CD4-positive, alpha-beta T cell (primary cell): ENCODE measurements at regions of chr4 and their contacts with region 1.

Region 1: GRCh38 chr4:75514131-75514948 is at the starts of genes RCHY1 and THAP6:
- DNase-seq: peak; percentile 84 to 97 (median 88)
- ATAC-seq: peak; percentile 86
- H3K4me3 ChIP-seq: peak within 1 kb of the TSS; percentile 77
- H3K4me3 Mint-ChIP-seq: no peak within 1 kb of the TSS
- H3K27ac ChIP-seq: peak within 1 kb of the TSS; percentile 94 to 97
- H3K27ac Mint-ChIP-seq: no peak within 1 kb of the TSS
- H3K4me1 ChIP-seq: peaks cover 21% of the 10 kb centered on the region
- H3K4me1 Mint-ChIP-seq: peaks cover 40% of the 10 kb centered on the region
- H3K27me3 ChIP-seq: no peaks in the 10 kb centered on the region
- H3K27me3 Mint-ChIP-seq: no peaks in the 10 kb centered on the region
- CTCF ChIP-seq: no peak
- total RNA-seq, gene RCHY1: 33.6 to 37.0 TPM
- total RNA-seq, gene THAP6: 19.1 to 22.8 TPM

Region 2: GRCh38 chr4:74659576-74660411 is 854.5 kb before region 1 on chr4:
- CTCF ChIA-PET with region 1: no interaction called
- POLR2A ChIA-PET with region 1: no interaction called
- intact Hi-C with region 1: no loop called
- DNase-seq: peak in 2 of 14 experiments; percentile 50 to 63
- ATAC-seq: no peak
- H3K4me3 ChIP-seq: no peak overlapping the region
- H3K4me3 Mint-ChIP-seq: no peak overlapping the region
- H3K27ac ChIP-seq: no peak overlapping the region
- H3K27ac Mint-ChIP-seq: no peak overlapping the region
- H3K4me1 ChIP-seq: no peaks in the 10 kb centered on the region
- H3K4me1 Mint-ChIP-seq: no peaks in the 10 kb centered on the region
- H3K27me3 ChIP-seq: no peaks in the 10 kb centered on the region
- H3K27me3 Mint-ChIP-seq: no peaks in the 10 kb centered on the region
- CTCF ChIP-seq: no peak

Region 3: GRCh38 chr4:75525910-75526309 is 11.6 kb after region 1 on chr4:
- CTCF ChIA-PET with region 1: no interaction called
- POLR2A ChIA-PET with region 1: interaction called, 15 read pairs
- intact Hi-C with region 1: no loop called
- DNase-seq: no peak
- ATAC-seq: no peak
- H3K4me3 ChIP-seq: no peak overlapping the region
- H3K4me3 Mint-ChIP-seq: no peak overlapping the region
- H3K27ac ChIP-seq: no peak overlapping the region
- H3K27ac Mint-ChIP-seq: no peak overlapping the region
- H3K4me1 ChIP-seq: no peaks in the 10 kb centered on the region
- H3K4me1 Mint-ChIP-seq: peaks cover 18% of the 10 kb centered on the region
- H3K27me3 ChIP-seq: no peaks in the 10 kb centered on the region
- H3K27me3 Mint-ChIP-seq: no peaks in the 10 kb centered on the region
- CTCF ChIP-seq: no peak

Region 4: GRCh38 chr4:75630174-75630936 is 116.0 kb after region 1 on chr4 and contains the start of gene CDKL2:
- CTCF ChIA-PET with region 1: no interaction called
- POLR2A ChIA-PET with region 1: interaction called, 14 read pairs
- intact Hi-C with region 1: loop called in 1 of 2 experiments (anchors 5 kb)
- DNase-seq: peak; percentile 88 to 96 (median 92)
- ATAC-seq: peak; percentile 99
- H3K4me3 ChIP-seq: peak within 1 kb of the TSS; percentile 85
- H3K4me3 Mint-ChIP-seq: peak within 1 kb of the TSS; percentile 90
- H3K27ac ChIP-seq: peak within 1 kb of the TSS in 1 of 2 donors; percentile 48
- H3K27ac Mint-ChIP-seq: peak within 1 kb of the TSS; percentile 75
- H3K4me1 ChIP-seq: peaks cover 16% of the 10 kb centered on the region
- H3K4me1 Mint-ChIP-seq: peaks cover 12% of the 10 kb centered on the region
- H3K27me3 ChIP-seq: no peaks in the 10 kb centered on the region
- H3K27me3 Mint-ChIP-seq: no peaks in the 10 kb centered on the region
- CTCF ChIP-seq: no peak
- total RNA-seq, gene CDKL2: 0.38 to 0.92 TPM

Region 5: GRCh38 chr4:75940692-75941253 is 426.4 kb after region 1 on chr4 and contains the start of gene NAAA:
- CTCF ChIA-PET with region 1: no interaction called
- POLR2A ChIA-PET with region 1: interaction called, 22 read pairs
- intact Hi-C with region 1: loop called in 1 of 2 experiments (anchors 10 kb)
- DNase-seq: peak; percentile 51 to 93 (median 72)
- ATAC-seq: peak; percentile 83
- H3K4me3 ChIP-seq: peak within 1 kb of the TSS; percentile 86
- H3K4me3 Mint-ChIP-seq: peak within 1 kb of the TSS; percentile 100
- H3K27ac ChIP-seq: peak within 1 kb of the TSS; percentile 79 to 86
- H3K27ac Mint-ChIP-seq: peak within 1 kb of the TSS; percentile 95
- H3K4me1 ChIP-seq: peaks cover 20% of the 10 kb centered on the region
- H3K4me1 Mint-ChIP-seq: peaks cover 27% of the 10 kb centered on the region
- H3K27me3 ChIP-seq: no peaks in the 10 kb centered on the region
- H3K27me3 Mint-ChIP-seq: no peaks in the 10 kb centered on the region
- CTCF ChIP-seq: no peak
- total RNA-seq, gene NAAA: 32.6 to 33.3 TPM

Region 6: DNA sequence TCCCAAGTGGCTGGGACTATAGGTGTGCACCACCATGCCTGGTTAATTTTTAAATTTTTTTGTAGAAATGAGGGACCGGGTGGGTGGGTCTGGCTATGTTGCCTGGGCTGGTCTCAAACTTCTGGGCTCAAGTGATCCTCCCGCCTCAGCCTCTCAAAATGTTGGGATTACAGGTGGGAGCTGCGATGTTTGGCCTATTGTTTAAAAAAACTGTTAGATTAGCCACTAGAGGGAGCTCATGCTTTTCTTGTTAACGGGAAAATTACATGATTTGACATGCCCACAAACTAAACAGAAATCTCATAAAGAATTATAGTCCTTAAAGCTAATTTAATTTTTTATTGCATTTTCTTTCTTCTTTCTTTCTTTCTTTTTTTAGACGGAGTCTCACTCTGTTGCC is 481.4 kb after region 1 on chr4:
- CTCF ChIA-PET with region 1: no interaction called
- POLR2A ChIA-PET with region 1: interaction called, 9 read pairs
- intact Hi-C with region 1: loop called in 1 of 2 experiments (anchors 10 kb)
- DNase-seq: peak in 5 of 14 experiments; percentile 3 to 71 (median 61)
- ATAC-seq: no peak
- H3K4me3 ChIP-seq: no peak overlapping the region
- H3K4me3 Mint-ChIP-seq: no peak overlapping the region
- H3K27ac ChIP-seq: no peak overlapping the region
- H3K27ac Mint-ChIP-seq: no peak overlapping the region
- H3K4me1 ChIP-seq: peaks cover 6% of the 10 kb centered on the region
- H3K4me1 Mint-ChIP-seq: peaks cover 8% of the 10 kb centered on the region
- H3K27me3 ChIP-seq: no peaks in the 10 kb centered on the region
- H3K27me3 Mint-ChIP-seq: no peaks in the 10 kb centered on the region
- CTCF ChIP-seq: peak; percentile 80

Region 7: GRCh38 chr4:76148142-76148865 is 634.0 kb after region 1 on chr4 and contains the start of gene NUP54:
- CTCF ChIA-PET with region 1: no interaction called
- POLR2A ChIA-PET with region 1: interaction called, 4 read pairs
- intact Hi-C with region 1: loop called (anchors 5 to 10 kb)
- DNase-seq: peak; percentile 90 to 97 (median 93)
- ATAC-seq: peak; percentile 97
- H3K4me3 ChIP-seq: peak within 1 kb of the TSS; percentile 95
- H3K4me3 Mint-ChIP-seq: peak within 1 kb of the TSS; percentile 99
- H3K27ac ChIP-seq: peak within 1 kb of the TSS; percentile 80 to 90
- H3K27ac Mint-ChIP-seq: peak within 1 kb of the TSS; percentile 92
- H3K4me1 ChIP-seq: peaks cover 15% of the 10 kb centered on the region
- H3K4me1 Mint-ChIP-seq: peaks cover 38% of the 10 kb centered on the region
- H3K27me3 ChIP-seq: no peaks in the 10 kb centered on the region
- H3K27me3 Mint-ChIP-seq: no peaks in the 10 kb centered on the region
- CTCF ChIP-seq: no peak
- total RNA-seq, gene NUP54: 94.1 to 108 TPM